ENCODE measurements at regions of chr7 and their contacts with region 1.

Region 1: DNA sequence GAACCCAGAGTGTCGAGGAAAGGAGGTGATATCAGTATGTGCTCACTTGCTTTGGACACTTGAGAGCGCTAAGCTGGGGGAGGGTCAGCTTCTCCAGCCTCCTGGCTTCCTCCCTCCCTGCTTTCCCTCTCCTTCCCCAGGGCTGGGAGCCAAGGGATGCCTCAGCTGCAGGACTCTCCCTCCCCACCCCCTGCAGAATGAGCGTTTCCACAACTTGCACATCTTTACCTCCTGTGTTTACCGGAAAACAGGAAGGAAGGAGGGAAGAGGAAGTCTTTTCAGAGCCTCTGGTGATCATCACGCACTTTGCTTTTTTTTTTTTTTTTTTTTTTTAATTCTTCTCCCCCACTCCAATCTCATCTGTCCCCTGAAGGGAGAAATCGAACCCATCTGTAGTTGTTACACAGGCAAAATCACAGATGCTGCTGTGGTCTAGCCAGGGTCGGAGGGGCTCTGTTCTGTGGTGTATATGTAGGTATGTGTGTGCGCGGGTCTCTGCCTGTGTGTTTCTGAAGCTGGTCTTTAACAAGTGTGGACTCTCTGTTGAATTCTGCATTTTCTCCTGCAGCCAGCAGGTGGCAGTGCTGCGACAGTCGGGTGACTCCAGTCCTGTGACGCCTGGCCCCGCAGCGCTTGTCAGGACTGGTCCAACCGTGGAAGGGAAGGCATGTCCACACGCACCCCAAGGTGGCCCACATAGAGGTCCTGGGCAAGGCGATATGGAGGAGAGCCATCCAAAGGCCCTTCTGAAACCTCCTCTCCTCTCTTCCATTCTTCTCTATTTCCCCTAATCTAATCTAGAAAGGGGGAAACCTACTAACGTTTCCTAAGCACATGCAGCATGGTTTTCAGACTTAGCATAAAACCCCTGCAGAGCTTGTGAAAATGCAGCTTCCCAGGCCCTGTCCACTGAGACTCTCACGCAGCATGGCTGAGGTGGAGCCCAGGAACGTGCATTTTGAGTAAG is 257.6 kb downstream of the PLXNA4 start:
- DNase-seq: peak; percentile 88 to 95 (median 92)
- ATAC-seq: peak; percentile 99
- H3K4me3 ChIP-seq: no peak overlapping the region
- H3K27ac ChIP-seq: no peak overlapping the region
- H3K4me1 ChIP-seq: no peaks in the 10 kb centered on the region
- H3K27me3 ChIP-seq: peaks cover 6 to 28% of the 10 kb centered on the region in 2 experiments; a peak in 4 of 5 replicates
- CTCF ChIP-seq: peak; percentile 89 to 97 (median 95)
- EP300 ChIP-seq: no peak
- POLR2A ChIP-seq: no peak
- RAD21 ChIP-seq: peak; percentile 88 to 93

Region 2: DNA sequence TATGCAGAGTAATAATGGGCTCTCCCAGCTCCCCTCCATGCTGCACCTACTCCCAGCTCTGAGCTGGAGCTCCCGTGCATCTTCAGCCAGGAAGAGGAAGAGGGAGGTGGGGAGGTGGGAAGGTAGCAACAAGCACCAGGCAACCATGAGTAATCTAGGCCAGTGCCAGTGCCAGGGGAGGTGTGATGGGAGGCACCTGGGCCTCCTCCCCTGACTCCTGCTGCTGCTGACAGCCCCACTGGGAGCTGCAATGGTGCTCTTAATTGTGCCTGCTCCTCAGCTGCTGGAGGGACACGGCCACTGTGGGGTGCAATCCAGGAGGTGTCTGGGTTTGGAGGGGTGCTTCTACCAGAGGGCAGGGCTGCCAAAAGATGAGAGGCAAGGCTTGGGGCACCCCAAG is 14.7 kb after region 1 on chr7:
- CTCF ChIA-PET with region 1: no interaction called
- POLR2A ChIA-PET with region 1: no interaction called
- in situ Hi-C with region 1: no loop called
- intact Hi-C with region 1: no loop called
- DNase-seq: no peak
- ATAC-seq: no peak
- H3K4me3 ChIP-seq: no peak overlapping the region
- H3K27ac ChIP-seq: no peak overlapping the region
- H3K4me1 ChIP-seq: no peaks in the 10 kb centered on the region
- H3K27me3 ChIP-seq: peaks cover 8 to 24% of the 10 kb centered on the region in 2 experiments; a peak in 4 of 5 replicates
- CTCF ChIP-seq: no peak
- EP300 ChIP-seq: no peak
- POLR2A ChIP-seq: no peak
- RAD21 ChIP-seq: no peak

Region 3: DNA sequence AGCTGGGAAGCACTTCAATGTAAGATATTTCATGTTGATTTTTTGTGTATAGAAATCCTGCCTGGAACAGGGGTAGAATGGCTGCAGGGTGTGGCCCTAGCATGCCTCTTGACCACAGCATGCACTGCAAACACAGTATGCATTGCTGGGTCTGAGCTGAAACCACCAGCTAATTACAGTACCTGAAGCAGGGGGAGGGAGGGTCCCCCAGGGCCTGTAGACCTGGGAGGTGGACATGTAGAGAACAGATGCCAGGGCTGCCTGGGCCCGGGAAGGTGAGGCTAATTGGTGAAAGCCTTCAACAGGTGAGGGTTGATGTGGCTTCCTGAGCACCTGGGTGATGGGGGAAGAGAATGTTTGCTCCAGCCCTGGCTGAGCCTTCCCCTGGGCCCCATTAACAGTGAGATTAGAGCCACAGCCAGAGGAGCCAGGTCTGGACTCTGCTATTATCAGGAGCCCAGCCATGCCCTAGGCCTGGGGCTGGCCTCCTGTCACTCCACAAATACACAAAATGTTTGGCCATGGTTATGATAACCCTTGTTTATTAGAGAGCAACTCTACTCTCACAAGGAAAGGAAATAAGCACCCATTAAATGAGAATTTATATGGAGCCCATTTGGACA is 174.3 kb after region 1 on chr7:
- CTCF ChIA-PET with region 1: interaction called, 3 read pairs
- POLR2A ChIA-PET with region 1: no interaction called
- in situ Hi-C with region 1: no loop called
- intact Hi-C with region 1: loop called (anchors 2 kb)
- DNase-seq: no peak
- ATAC-seq: no peak
- H3K4me3 ChIP-seq: no peak overlapping the region
- H3K27ac ChIP-seq: no peak overlapping the region
- H3K4me1 ChIP-seq: peaks cover 0 to 3% of the 10 kb centered on the region in 2 experiments; a peak in 2 of 5 replicates
- H3K27me3 ChIP-seq: peaks cover 4 to 39% of the 10 kb centered on the region in 2 experiments; a peak in 4 of 5 replicates
- CTCF ChIP-seq: no peak
- EP300 ChIP-seq: no peak
- POLR2A ChIP-seq: no peak
- RAD21 ChIP-seq: no peak

Region 4: DNA sequence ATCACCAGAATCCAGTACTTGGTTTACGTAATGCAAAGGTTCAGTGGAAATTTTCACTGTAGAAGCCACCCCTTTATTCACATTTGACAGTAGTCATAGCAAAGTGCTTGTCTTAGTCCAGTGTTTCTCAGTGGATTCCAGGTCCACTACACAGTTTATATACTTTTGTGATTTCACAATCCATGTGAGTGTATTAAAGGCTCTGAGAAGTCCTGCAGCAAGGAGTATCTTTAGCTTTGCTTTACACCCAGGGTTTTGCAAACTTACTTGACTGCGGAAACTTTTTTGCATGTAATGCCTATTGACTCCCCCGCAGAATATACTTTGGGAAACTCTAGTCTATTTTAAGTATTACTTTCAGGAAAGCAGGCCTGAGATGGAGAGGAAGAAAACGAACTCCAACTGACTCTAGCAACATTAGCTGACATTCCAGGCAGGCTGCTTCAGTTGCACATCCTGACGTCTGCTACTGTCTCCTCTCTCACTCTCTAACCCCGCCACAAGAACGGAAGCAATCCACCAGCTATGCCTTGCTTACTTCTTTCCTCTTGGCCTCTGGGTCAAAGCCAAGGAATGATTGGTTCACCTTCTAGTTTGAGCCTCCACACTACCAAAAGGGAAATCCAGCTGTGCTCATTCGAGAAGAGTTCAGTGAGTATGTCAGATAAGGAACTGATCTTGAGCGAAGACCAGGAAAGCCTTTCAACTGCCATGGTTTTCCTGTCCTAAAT is 251.4 kb after region 1 on chr7:
- CTCF ChIA-PET with region 1: no interaction called
- POLR2A ChIA-PET with region 1: no interaction called
- in situ Hi-C with region 1: loop called (anchors 5 kb)
- intact Hi-C with region 1: no loop called
- DNase-seq: no peak
- ATAC-seq: no peak
- H3K4me3 ChIP-seq: no peak overlapping the region
- H3K27ac ChIP-seq: no peak overlapping the region
- H3K4me1 ChIP-seq: no peaks in the 10 kb centered on the region
- H3K27me3 ChIP-seq: peaks cover 24 to 43% of the 10 kb centered on the region in 2 experiments
- CTCF ChIP-seq: no peak
- EP300 ChIP-seq: no peak
- POLR2A ChIP-seq: no peak
- RAD21 ChIP-seq: no peak

Region 5: DNA sequence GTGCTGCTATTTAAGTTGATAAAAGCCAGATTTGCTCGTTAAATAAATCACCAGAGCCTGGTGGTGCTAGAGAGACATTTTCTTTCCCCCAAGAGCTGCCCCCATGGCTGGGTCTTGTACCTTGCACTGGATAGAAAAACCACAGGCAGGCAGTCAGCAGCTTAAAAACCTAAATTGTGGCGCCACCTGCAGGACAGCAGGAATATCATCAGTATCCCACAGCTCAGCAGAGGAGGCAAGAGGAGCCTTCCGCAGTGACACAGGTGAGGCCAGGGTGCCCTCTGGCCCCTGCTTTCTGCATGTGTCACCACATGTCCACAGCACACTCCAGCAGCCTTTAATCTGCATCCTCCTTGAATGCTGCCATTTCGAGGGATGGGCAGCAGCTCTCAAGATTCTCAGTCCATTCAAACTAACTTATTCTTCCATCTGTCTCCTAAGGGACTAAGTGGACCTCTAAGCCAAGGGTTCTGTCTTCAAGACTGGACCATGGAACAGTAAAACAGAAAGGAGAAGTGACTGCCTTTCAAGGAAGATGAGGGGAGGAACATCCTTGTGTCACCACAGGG is 262.2 kb after region 1 on chr7:
- CTCF ChIA-PET with region 1: interaction called, 15 read pairs
- POLR2A ChIA-PET with region 1: interaction called, 3 read pairs
- in situ Hi-C with region 1: no loop called
- intact Hi-C with region 1: loop called (anchors 1 kb)
- DNase-seq: peak; percentile 77 to 88 (median 80)
- ATAC-seq: peak; percentile 98
- H3K4me3 ChIP-seq: no peak overlapping the region
- H3K27ac ChIP-seq: no peak overlapping the region
- H3K4me1 ChIP-seq: peaks cover 0 to 8% of the 10 kb centered on the region in 2 experiments; a peak in 1 of 5 replicates
- H3K27me3 ChIP-seq: peaks cover 26 to 28% of the 10 kb centered on the region in 2 experiments; a peak in 4 of 5 replicates
- CTCF ChIP-seq: peak; percentile 91 to 94 (median 93)
- EP300 ChIP-seq: no peak
- POLR2A ChIP-seq: no peak
- RAD21 ChIP-seq: peak; percentile 88 to 90

Measured in K562 (cell line).